Naive thymus-derived CD4-positive, alpha-beta T cell (primary cell): ENCODE measurements at regions of chr22 and their contacts with region 1.

Region 1: GRCh38 chr22:22818861-22819855 is 68.5 kb upstream of the IGLL5 start:
- DNase-seq: peak in 5 of 9 donors; percentile 38 to 52 (median 43)
- ATAC-seq: peak; percentile 59
- H3K4me3 ChIP-seq: peak overlapping the region; percentile 50
- H3K4me3 Mint-ChIP-seq: peak overlapping the region; percentile 55 to 88 (median 80)
- H3K27ac ChIP-seq: peak overlapping the region; percentile 66
- H3K27ac Mint-ChIP-seq: peak overlapping the region; percentile 84 to 99 (median 91)
- H3K4me1 ChIP-seq: peaks cover 90 to 92% of the 10 kb centered on the region in 2 donors
- H3K4me1 Mint-ChIP-seq: peaks cover 87 to 99% (median 99%) of the 10 kb centered on the region in 7 donors
- H3K27me3 ChIP-seq: no peaks in the 10 kb centered on the region
- H3K27me3 Mint-ChIP-seq: peaks cover 0 to 2% (median 0%) of the 10 kb centered on the region in 5 donors

Region 2: DNA sequence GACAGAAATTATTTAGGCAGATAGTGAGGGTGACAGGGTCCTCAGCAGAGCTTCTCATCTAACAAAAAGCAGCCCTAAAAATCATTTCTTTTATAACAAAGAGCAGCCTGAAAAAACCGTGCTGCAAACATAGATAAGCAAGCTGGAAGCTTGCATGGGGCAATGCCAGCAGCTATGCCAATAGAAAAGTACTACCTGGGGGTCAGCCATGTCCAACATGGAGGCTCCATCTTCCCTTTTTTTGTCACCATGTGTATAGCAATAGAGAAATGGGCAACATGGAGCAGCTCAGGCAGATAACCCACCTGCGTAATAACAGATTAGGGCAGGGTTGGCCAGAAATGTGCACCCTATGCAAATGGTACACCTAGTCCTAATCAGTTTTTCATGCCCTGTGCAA is 11.0 kb after region 1 on chr22:
- CTCF ChIA-PET with region 1: interaction called, 3 read pairs
- POLR2A ChIA-PET with region 1: interaction called, 8 read pairs
- intact Hi-C with region 1: loop called in 1 of 2 experiments (anchors 1 kb)
- DNase-seq: no peak
- ATAC-seq: no peak
- H3K4me3 ChIP-seq: no peak overlapping the region
- H3K4me3 Mint-ChIP-seq: no peak overlapping the region
- H3K27ac ChIP-seq: no peak overlapping the region
- H3K27ac Mint-ChIP-seq: no peak overlapping the region
- H3K4me1 ChIP-seq: no peaks in the 10 kb centered on the region
- H3K4me1 Mint-ChIP-seq: peaks cover 11 to 38% (median 22%) of the 10 kb centered on the region in 7 donors
- H3K27me3 ChIP-seq: no peaks in the 10 kb centered on the region
- H3K27me3 Mint-ChIP-seq: peaks cover 0 to 67% (median 0%) of the 10 kb centered on the region in 5 donors

Region 3: GRCh38 chr22:22855617-22856308 is 36.6 kb after region 1 on chr22:
- CTCF ChIA-PET with region 1: interaction called, 247 read pairs
- POLR2A ChIA-PET with region 1: interaction called, 96 read pairs
- intact Hi-C with region 1: no loop called
- DNase-seq: peak in 6 of 9 donors; percentile 6 to 55 (median 20)
- ATAC-seq: peak; percentile 63
- H3K4me3 ChIP-seq: no peak overlapping the region
- H3K4me3 Mint-ChIP-seq: no peak overlapping the region
- H3K27ac ChIP-seq: no peak overlapping the region
- H3K27ac Mint-ChIP-seq: no peak overlapping the region
- H3K4me1 ChIP-seq: peaks cover 0 to 4% of the 10 kb centered on the region in 2 donors
- H3K4me1 Mint-ChIP-seq: peaks cover 0 to 5% (median 0%) of the 10 kb centered on the region in 7 donors
- H3K27me3 ChIP-seq: no peaks in the 10 kb centered on the region
- H3K27me3 Mint-ChIP-seq: peaks cover 0 to 58% (median 0%) of the 10 kb centered on the region in 5 donors

Region 4: GRCh38 chr22:23144932-23145873 is 326.0 kb after region 1 on chr22 and contains the start of gene RAB36:
- CTCF ChIA-PET with region 1: no interaction called
- POLR2A ChIA-PET with region 1: no interaction called
- intact Hi-C with region 1: loop called in 1 of 2 experiments (anchors 1 kb)
- DNase-seq: peak; percentile 77 to 93 (median 81)
- ATAC-seq: peak; percentile 78
- H3K4me3 ChIP-seq: peak within 1 kb of the TSS; percentile 25
- H3K4me3 Mint-ChIP-seq: peak within 1 kb of the TSS; percentile 72 to 84 (median 82)
- H3K27ac ChIP-seq: peak within 1 kb of the TSS; percentile 78
- H3K27ac Mint-ChIP-seq: peak within 1 kb of the TSS; percentile 79 to 96 (median 93)
- H3K4me1 ChIP-seq: peaks cover 38 to 45% of the 10 kb centered on the region in 2 donors
- H3K4me1 Mint-ChIP-seq: peaks cover 27 to 60% (median 49%) of the 10 kb centered on the region in 7 donors
- H3K27me3 ChIP-seq: no peaks in the 10 kb centered on the region
- H3K27me3 Mint-ChIP-seq: peaks cover 0 to 20% (median 0%) of the 10 kb centered on the region in 5 donors
- total RNA-seq, gene RAB36: 0.10 to 1.2 (median 0.38) TPM